HepG2 (cell line): ENCODE measurements at regions of chr6 and their contacts with region 1.

Region 1: DNA sequence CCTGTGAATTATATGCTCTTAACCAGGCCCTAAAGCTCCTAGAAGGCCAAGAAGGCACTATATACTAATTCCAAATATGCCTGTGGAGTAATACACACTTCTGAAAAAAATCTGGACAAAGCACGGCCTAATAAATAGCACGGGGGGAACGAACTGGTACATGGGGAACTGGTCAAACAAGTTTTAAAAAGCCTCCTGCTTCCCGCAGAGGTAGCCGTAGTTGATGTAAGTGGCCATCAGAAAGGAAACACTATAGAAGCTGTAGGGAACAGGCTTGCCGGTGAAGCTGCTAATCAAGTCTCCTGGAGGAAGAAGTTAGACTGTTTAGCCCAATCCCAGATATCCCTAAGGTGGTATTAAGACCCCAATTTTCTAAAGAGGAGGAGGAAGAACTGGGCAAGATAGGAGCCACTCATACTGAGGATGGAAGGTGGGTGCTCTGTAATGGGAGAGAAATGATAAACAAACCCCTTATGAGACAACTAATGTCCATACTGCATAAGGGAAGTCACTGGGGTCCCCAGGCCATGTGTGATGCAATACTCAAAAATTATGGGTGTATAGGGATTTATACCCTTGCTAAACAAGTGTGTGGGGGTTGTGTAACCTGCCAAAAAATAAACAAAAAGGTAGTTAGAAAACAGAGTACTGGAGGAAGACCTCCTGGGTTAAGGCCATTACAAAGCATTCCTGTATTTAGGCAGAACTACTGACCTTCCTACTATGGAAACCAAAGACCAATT is 27.1 kb upstream of the ZNF318 start:
- DNase-seq: no peak
- ATAC-seq: no peak
- H3K4me3 ChIP-seq: no peak overlapping the region
- H3K27ac ChIP-seq: no peak overlapping the region
- H3K4me1 ChIP-seq: peaks cover 21% of the 10 kb centered on the region
- H3K27me3 ChIP-seq: peaks cover 5 to 45% of the 10 kb centered on the region in 2 experiments; a peak in 4 of 5 replicates
- CTCF ChIP-seq: no peak
- EP300 ChIP-seq: no peak
- POLR2A ChIP-seq: no peak
- RAD21 ChIP-seq: no peak

Region 2: GRCh38 chr6:43386492-43386891 is 10.1 kb before region 1 on chr6:
- CTCF ChIA-PET with region 1: no interaction called
- POLR2A ChIA-PET with region 1: no interaction called
- in situ Hi-C with region 1: no loop called
- intact Hi-C with region 1: loop called (anchors 1 kb)
- DNase-seq: peak; percentile 21
- ATAC-seq: no peak
- H3K4me3 ChIP-seq: no peak overlapping the region
- H3K27ac ChIP-seq: no peak overlapping the region
- H3K4me1 ChIP-seq: no peaks in the 10 kb centered on the region
- H3K27me3 ChIP-seq: peaks cover 0 to 29% of the 10 kb centered on the region in 2 experiments; a peak in 4 of 5 replicates
- CTCF ChIP-seq: peak; percentile 38
- EP300 ChIP-seq: no peak
- POLR2A ChIP-seq: no peak
- RAD21 ChIP-seq: no peak

Region 3: DNA sequence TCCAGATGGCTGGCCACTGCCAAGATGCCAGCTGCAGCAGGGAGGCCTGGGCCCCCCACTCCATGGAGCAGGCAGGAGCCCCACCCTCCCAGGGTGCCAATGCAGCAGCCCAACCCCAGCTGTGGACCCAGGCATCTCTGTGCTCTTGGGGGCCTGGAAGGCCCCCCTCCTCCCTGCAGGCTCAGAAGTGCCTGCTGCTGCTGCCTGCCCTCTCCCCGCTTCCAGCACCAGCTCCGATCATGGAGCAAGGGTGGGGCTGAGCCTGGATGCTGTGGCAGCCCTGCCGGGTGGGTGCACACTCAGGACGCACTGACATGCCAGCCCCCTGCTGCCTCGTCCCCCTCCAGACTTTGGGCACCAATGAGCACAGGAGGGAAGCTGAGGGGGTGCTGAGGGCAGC is 16.0 kb after region 1 on chr6:
- CTCF ChIA-PET with region 1: no interaction called
- POLR2A ChIA-PET with region 1: no interaction called
- in situ Hi-C with region 1: no loop called
- intact Hi-C with region 1: no loop called
- DNase-seq: no peak
- ATAC-seq: no peak
- H3K4me3 ChIP-seq: no peak overlapping the region
- H3K27ac ChIP-seq: no peak overlapping the region
- H3K4me1 ChIP-seq: no peaks in the 10 kb centered on the region
- H3K27me3 ChIP-seq: peaks cover 0 to 13% of the 10 kb centered on the region in 2 experiments; a peak in 3 of 5 replicates
- CTCF ChIP-seq: no peak
- EP300 ChIP-seq: no peak
- POLR2A ChIP-seq: no peak
- RAD21 ChIP-seq: no peak